Endothelial cell of umbilical vein (primary cell): ENCODE measurements at regions of chr14 and their contacts with region 1.

Region 1: GRCh38 chr14:102694530-102695166 is 82.6 kb upstream of the TRAF3 start:
- DNase-seq: peak; percentile 77
- H3K4me3 ChIP-seq: no peak overlapping the region
- H3K27ac ChIP-seq: no peak overlapping the region
- H3K4me1 ChIP-seq: peaks cover 13% of the 10 kb centered on the region
- H3K27me3 ChIP-seq: no peaks in the 10 kb centered on the region
- CTCF ChIP-seq: peak; percentile 50 to 60
- POLR2A ChIP-seq: no peak

Region 2: GRCh38 chr14:102591889-102592763 is 102.5 kb before region 1 on chr14 and contains the start of gene RCOR1:
- CTCF ChIA-PET with region 1: interaction called, 59 read pairs
- POLR2A ChIA-PET with region 1: no interaction called
- dilution Hi-C with region 1: no loop called
- intact Hi-C with region 1: loop called (anchors 1 kb)
- DNase-seq: peak; percentile 96
- H3K4me3 ChIP-seq: peak within 1 kb of the TSS; percentile 84 to 100 (median 87)
- H3K27ac ChIP-seq: peak within 1 kb of the TSS; percentile 95
- H3K4me1 ChIP-seq: peaks cover 20% of the 10 kb centered on the region
- H3K27me3 ChIP-seq: no peaks in the 10 kb centered on the region
- CTCF ChIP-seq: no peak
- POLR2A ChIP-seq: peak; percentile 91
- total RNA-seq, gene RCOR1: 31.8 and 32.2 TPM in 2 replicates

Region 3: GRCh38 chr14:102683399-102684297 is 11.0 kb before region 1 on chr14:
- CTCF ChIA-PET with region 1: interaction called, 19 read pairs
- POLR2A ChIA-PET with region 1: no interaction called
- dilution Hi-C with region 1: no loop called
- intact Hi-C with region 1: no loop called
- DNase-seq: no peak
- H3K4me3 ChIP-seq: no peak overlapping the region
- H3K27ac ChIP-seq: no peak overlapping the region
- H3K4me1 ChIP-seq: no peaks in the 10 kb centered on the region
- H3K27me3 ChIP-seq: no peaks in the 10 kb centered on the region
- CTCF ChIP-seq: no peak
- POLR2A ChIP-seq: no peak

Region 4: GRCh38 chr14:102759456-102760187 is 65.0 kb after region 1 on chr14:
- CTCF ChIA-PET with region 1: interaction called, 15 read pairs
- POLR2A ChIA-PET with region 1: no interaction called
- dilution Hi-C with region 1: no loop called
- intact Hi-C with region 1: no loop called
- DNase-seq: peak; percentile 41
- H3K4me3 ChIP-seq: no peak overlapping the region
- H3K27ac ChIP-seq: no peak overlapping the region
- H3K4me1 ChIP-seq: no peaks in the 10 kb centered on the region
- H3K27me3 ChIP-seq: peaks cover 11 to 15% of the 10 kb centered on the region in 2 experiments
- CTCF ChIP-seq: peak in 1 of 2 donors; percentile 5
- POLR2A ChIP-seq: no peak

Region 5: DNA sequence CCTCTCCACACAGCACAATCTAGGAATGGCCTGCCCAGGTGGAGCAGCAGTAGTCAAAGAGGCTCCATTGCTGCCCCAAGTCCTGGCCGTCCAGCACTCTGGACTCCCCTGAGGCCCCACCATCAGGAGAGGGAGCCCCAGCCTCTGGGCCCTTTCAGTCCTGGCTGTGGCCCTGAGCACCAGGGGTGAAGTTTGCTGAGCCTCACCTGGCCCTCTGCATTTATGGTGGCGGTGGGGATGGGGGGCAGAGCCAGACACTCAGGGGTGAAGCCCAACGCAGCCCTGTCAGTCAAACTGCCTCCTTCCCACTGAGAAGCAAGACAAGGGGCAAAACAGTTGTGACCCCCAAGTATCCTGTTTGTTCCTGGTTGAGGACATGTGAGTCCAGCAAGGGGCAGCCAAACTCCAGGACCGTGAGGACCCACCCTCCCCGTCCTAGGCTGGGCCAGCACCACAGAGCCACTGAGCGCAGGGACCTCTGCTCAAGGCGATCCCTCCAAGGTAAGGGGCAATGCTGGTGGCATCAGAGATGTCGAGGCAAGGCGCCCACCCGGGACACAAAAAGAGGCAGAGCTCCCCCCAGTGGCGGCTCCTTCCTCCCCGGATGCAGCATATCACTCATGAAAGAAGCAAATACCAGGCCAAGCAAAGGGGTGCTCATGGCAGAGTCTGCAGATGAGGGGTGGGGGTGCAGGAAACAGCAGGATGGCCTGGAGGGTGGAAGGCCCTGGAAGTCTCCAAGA is 223.0 kb after region 1 on chr14:
- CTCF ChIA-PET with region 1: interaction called, 47 read pairs
- POLR2A ChIA-PET with region 1: no interaction called
- dilution Hi-C with region 1: no loop called
- intact Hi-C with region 1: loop called (anchors 1 kb)
- DNase-seq: peak; percentile 47
- H3K4me3 ChIP-seq: no peak overlapping the region
- H3K27ac ChIP-seq: no peak overlapping the region
- H3K4me1 ChIP-seq: no peaks in the 10 kb centered on the region
- H3K27me3 ChIP-seq: peaks cover 7 to 8% of the 10 kb centered on the region in 2 experiments
- CTCF ChIP-seq: peak; percentile 72 to 78
- POLR2A ChIP-seq: no peak